WTC11 (cell line): ENCODE measurements at regions of chr15 and their contacts with region 1.

Region 1: GRCh38 chr15:96330450-96331145 is at the start of gene NR2F2:
- DNase-seq: peak; percentile 91
- ATAC-seq: peak; percentile 68
- H3K4me3 Mint-ChIP-seq: peak within 1 kb of the TSS; percentile 76
- H3K27ac Mint-ChIP-seq: no peak within 1 kb of the TSS
- H3K4me1 Mint-ChIP-seq: peaks cover 69% of the 10 kb centered on the region
- H3K27me3 Mint-ChIP-seq: peaks cover 96% of the 10 kb centered on the region
- CTCF ChIP-seq: no peak
- total RNA-seq, gene NR2F2: 0.27 to 0.57 TPM (median 0.55 TPM) in 3 replicates

Region 2: GRCh38 chr15:96312639-96313335 is 17.8 kb before region 1 on chr15:
- CTCF ChIA-PET with region 1: interaction called, 13 read pairs
- POLR2A ChIA-PET with region 1: no interaction called
- DNase-seq: no peak
- ATAC-seq: no peak
- H3K4me3 Mint-ChIP-seq: no peak overlapping the region
- H3K27ac Mint-ChIP-seq: no peak overlapping the region
- H3K4me1 Mint-ChIP-seq: peaks cover 23% of the 10 kb centered on the region
- H3K27me3 Mint-ChIP-seq: peaks cover 35% of the 10 kb centered on the region
- CTCF ChIP-seq: no peak

Region 3: DNA sequence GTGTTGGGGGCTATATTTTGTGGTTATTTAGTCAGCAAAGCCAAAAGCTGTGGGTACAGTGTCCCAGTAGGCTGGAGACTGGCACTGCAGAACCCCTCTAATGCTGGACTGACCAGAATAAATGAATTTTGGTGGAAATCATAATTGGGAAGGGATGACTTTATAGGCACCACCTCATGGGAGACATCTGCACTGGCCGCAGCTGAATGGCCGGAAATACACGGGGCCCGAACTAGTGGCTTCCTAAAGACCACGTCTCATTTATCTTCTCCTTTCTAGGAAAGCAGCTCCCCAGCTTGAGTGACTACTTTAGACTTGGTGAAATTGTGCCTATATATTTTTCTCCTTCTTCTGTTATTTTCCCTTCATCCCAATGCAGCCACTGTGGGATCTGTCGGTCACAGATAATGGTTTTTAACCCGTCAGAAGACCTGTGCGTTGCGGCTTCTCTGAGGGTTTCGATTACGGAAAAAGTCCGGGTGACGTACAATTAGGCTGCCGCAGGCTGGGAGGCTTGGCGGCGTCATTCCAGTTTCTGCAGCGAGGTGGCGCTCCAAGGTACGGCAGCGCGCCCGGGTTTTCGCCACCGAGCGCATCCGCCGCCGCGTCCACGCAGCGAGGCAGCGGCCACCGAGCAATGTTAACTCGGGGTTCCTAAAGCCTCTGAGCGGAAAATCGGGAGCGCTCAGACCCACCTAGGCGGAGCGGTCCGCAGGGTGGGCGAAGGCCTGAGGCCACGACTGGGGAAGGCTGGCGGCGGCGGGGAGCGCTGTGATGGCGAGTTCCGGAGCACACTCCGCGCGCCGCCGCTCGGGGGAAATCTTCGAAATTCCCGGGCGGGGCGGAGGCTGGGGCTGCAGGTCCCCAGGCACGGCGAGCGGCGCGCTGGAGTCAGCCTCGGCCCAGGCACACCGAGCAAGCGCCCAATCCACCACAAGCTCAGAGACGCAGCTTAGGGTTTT is 26.2 kb after region 1 on chr15:
- CTCF ChIA-PET with region 1: interaction called, 52 read pairs
- POLR2A ChIA-PET with region 1: interaction called, 3 read pairs
- DNase-seq: peak; percentile 85
- ATAC-seq: peak; percentile 1; the same call in 1 of the 2 replicates
- H3K4me3 Mint-ChIP-seq: peak overlapping the region; percentile 71
- H3K27ac Mint-ChIP-seq: no peak overlapping the region
- H3K4me1 Mint-ChIP-seq: peaks cover 54% of the 10 kb centered on the region
- H3K27me3 Mint-ChIP-seq: no peaks in the 10 kb centered on the region; the same call in 1 of the 2 replicates
- CTCF ChIP-seq: peak; percentile 98

Region 4: GRCh38 chr15:96369825-96370621 is 39.4 kb after region 1 on chr15:
- CTCF ChIA-PET with region 1: interaction called, 11 read pairs
- POLR2A ChIA-PET with region 1: no interaction called
- DNase-seq: peak; percentile 42
- ATAC-seq: peak; percentile 51
- H3K4me3 Mint-ChIP-seq: no peak overlapping the region
- H3K27ac Mint-ChIP-seq: no peak overlapping the region
- H3K4me1 Mint-ChIP-seq: peaks cover 40% of the 10 kb centered on the region
- H3K27me3 Mint-ChIP-seq: no peaks in the 10 kb centered on the region; the same call in 1 of the 2 replicates
- CTCF ChIP-seq: no peak

Region 5: DNA sequence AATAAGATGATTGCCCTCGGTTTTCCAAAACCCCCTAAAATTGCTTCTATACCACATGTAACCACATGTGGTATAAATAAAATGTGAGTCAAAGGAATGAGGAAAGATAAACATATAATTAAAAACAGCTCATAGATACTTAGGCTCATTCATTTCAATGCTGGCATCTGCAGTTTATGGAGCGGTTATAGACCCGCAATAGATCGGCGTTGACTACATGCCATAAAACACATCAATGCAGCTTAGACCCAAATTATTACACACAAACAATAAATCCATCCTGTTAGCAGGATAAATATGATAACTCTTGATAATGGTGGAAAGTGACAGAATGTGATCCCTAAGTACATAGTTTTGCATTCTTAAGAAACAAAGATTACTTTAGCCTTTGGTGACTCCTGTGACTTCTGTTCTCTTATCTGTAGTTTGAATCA is 143.7 kb after region 1 on chr15:
- CTCF ChIA-PET with region 1: no interaction called
- POLR2A ChIA-PET with region 1: no interaction called
- DNase-seq: no peak
- ATAC-seq: no peak
- H3K4me3 Mint-ChIP-seq: no peak overlapping the region
- H3K27ac Mint-ChIP-seq: no peak overlapping the region
- H3K4me1 Mint-ChIP-seq: no peaks in the 10 kb centered on the region
- H3K27me3 Mint-ChIP-seq: no peaks in the 10 kb centered on the region
- CTCF ChIP-seq: no peak

Region 6: GRCh38 chr15:97248376-97248775 is 917.8 kb after region 1 on chr15:
- CTCF ChIA-PET with region 1: interaction called, 12 read pairs
- POLR2A ChIA-PET with region 1: no interaction called
- DNase-seq: no peak
- ATAC-seq: no peak
- H3K4me3 Mint-ChIP-seq: no peak overlapping the region
- H3K27ac Mint-ChIP-seq: no peak overlapping the region
- H3K4me1 Mint-ChIP-seq: no peaks in the 10 kb centered on the region
- H3K27me3 Mint-ChIP-seq: no peaks in the 10 kb centered on the region
- CTCF ChIP-seq: no peak